Endothelial cell of umbilical vein (primary cell): ENCODE measurements at regions of chr7 and their contacts with region 1.

Region 1: DNA sequence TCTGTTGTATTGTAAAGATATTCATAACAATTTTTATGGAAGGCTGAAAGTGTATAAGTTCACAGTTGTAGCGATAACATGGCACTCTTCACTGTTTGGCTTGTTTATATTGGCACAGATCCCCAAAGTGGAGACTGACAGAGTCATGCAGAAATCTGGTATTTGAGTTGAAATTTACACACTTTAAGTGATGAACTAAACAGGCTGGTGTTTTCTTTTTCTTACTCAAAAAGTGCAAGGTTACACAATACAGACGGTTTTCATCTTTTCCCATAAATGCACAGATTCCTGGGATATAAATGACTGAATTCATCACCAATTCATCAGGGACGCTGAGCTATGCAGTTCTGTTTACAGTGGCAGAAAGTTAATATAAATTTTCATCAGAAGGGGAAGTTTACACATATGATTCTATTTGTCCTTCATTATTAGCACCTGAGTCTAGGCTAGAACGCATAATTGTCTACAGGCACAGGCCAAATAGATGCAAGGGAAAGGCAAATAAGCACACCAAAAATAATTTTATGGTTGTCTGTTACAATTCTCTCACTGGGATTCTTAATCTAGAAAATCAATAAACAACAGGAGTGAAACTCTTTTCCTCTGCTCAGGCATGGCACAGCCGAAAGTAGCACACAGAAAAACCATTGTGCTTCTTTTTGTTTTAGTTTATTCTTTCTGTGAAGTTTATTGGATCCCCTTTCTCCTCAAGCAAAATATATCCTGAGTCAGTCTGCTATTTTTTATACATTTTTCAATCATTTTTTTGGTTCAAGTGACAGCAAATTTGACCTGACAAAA is 88.0 kb downstream of the FOXP2 start:
- DNase-seq: peak; percentile 84
- H3K4me3 ChIP-seq: peak overlapping the region in 1 of 3 experiments; percentile 32
- H3K27ac ChIP-seq: no peak overlapping the region
- H3K4me1 ChIP-seq: peaks cover 8% of the 10 kb centered on the region
- H3K27me3 ChIP-seq: no peaks in the 10 kb centered on the region
- CTCF ChIP-seq: no peak
- POLR2A ChIP-seq: no peak

Region 2: DNA sequence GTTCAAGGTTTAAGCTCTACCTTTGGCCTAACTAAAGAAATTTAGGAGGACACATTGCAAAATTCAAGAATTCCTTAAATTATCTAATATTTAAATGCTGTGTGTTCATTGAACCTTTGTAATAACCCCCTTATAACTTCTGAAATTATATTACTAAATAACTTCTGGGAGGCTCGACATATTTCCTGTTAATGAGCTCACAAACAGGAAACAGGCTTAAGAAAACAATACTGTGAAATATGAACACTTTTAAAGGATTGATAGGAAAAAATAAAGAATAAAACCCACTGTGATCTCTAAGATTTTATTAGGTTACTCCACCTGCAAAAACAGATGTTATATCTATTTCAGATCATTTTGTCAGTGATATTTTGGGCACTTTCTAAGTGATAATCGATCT is 14.0 kb before region 1 on chr7:
- CTCF ChIA-PET with region 1: interaction called, 6 read pairs
- POLR2A ChIA-PET with region 1: no interaction called
- dilution Hi-C with region 1: no loop called
- intact Hi-C with region 1: loop called (anchors 2 kb)
- DNase-seq: peak; percentile 46
- H3K4me3 ChIP-seq: no peak overlapping the region
- H3K27ac ChIP-seq: no peak overlapping the region
- H3K4me1 ChIP-seq: peaks cover 11% of the 10 kb centered on the region
- H3K27me3 ChIP-seq: no peaks in the 10 kb centered on the region
- CTCF ChIP-seq: no peak
- POLR2A ChIP-seq: no peak